ENCODE measurements at regions of chr2 and their contacts with region 1.

Region 1: DNA sequence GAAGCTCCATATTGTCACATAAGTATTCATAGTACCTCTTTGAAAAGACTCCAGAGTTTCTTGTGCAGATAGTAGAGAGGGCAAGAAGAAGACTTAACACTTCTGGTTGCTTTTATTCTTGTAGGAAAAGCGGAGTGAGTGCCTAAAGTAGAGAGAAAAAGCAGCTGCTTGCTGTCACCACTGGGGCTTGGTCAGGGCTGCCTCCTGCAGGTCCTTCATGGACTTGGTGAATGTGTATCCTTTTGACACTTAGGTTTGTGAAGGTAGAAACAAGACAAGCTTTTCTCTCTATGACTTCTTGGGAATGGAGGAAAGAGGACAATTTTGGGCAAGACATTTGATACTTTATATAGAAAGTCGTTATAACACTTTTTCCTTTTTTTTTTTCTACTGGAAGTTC is 312.8 kb upstream of the FANCL start:
- DNase-seq: no peak
- H3K4me3 ChIP-seq: no peak overlapping the region
- H3K27ac ChIP-seq: no peak overlapping the region
- H3K4me1 ChIP-seq: peaks cover 0 to 8% (median 2%) of the 10 kb centered on the region in 4 experiments; a peak in 4 of 7 replicates
- H3K27me3 ChIP-seq: no peaks in the 10 kb centered on the region
- CTCF ChIP-seq: peak; percentile 67 to 84 (median 72)
- EP300 ChIP-seq: no peak
- POLR2A ChIP-seq: no peak
- RAD21 ChIP-seq: peak; percentile 89 to 94

Region 2: DNA sequence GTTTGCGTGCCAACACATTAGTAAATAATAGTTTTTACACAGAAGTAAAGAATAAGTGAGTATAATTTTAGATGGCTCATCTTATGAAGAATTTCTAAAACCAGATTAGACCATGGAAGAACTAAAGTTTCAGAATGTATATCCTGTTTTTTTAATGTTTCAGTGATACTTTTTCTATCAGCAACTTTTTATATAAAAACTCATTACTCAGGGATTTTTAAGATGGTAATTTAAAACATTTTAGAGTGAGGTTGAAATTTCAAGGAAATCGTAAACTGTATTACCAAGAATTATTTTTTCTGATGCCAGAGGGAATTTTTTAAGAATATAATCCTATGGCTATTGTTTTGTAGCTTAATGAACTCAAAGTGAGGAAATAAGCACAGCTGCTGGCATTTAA is 184.3 kb before region 1 on chr2:
- CTCF ChIA-PET with region 1: no interaction called
- POLR2A ChIA-PET with region 1: no interaction called
- DNase-seq: no peak
- H3K4me3 ChIP-seq: no peak overlapping the region
- H3K27ac ChIP-seq: no peak overlapping the region
- H3K4me1 ChIP-seq: no peaks in the 10 kb centered on the region; a peak in 1 of 7 replicates
- H3K27me3 ChIP-seq: no peaks in the 10 kb centered on the region
- CTCF ChIP-seq: no peak
- EP300 ChIP-seq: no peak
- POLR2A ChIP-seq: no peak
- RAD21 ChIP-seq: no peak

Region 3: DNA sequence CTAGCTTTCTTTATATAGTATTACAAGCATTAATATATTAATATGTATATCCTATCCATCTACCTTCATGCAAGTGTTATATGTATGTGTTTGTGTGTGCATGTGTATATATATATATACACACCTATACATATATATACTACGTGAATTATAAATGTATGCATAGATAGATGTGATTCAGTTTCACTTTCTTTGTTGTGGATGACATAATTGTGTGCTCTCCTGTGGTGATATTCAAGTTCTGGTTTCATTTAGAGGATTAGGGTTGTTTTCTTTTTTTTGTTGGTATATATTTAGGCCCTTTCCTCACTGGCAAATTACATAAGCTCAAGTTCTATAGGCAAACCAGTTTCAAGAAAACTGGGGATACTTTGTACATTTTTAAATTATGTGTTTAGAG is 87.1 kb before region 1 on chr2:
- CTCF ChIA-PET with region 1: interaction called, 12 read pairs
- POLR2A ChIA-PET with region 1: no interaction called
- DNase-seq: no peak
- H3K4me3 ChIP-seq: no peak overlapping the region
- H3K27ac ChIP-seq: no peak overlapping the region
- H3K4me1 ChIP-seq: no peaks in the 10 kb centered on the region
- H3K27me3 ChIP-seq: no peaks in the 10 kb centered on the region
- CTCF ChIP-seq: no peak
- EP300 ChIP-seq: no peak
- POLR2A ChIP-seq: no peak
- RAD21 ChIP-seq: no peak

Region 4: DNA sequence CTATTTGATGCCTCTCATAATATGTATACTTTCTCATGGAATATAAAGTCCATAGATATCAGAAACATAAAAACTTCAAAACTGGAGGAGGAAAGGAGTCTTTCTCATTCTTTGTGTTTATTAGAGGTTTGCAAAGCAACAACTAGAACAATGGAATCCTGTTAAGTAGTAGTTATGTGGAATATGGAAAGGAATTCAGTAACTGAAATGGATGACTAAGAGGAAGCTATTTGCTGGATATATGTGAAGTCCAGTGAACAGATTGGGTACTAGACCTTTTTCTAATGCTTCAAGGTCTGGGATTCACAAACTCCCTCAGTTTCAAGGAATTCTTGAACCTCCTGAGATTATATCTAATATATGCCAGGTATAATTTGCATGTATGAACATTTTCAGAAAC is 40.8 kb after region 1 on chr2:
- CTCF ChIA-PET with region 1: no interaction called
- POLR2A ChIA-PET with region 1: no interaction called
- DNase-seq: no peak
- H3K4me3 ChIP-seq: no peak overlapping the region
- H3K27ac ChIP-seq: no peak overlapping the region
- H3K4me1 ChIP-seq: peaks cover 0 to 4% (median 0%) of the 10 kb centered on the region in 4 experiments; a peak in 1 of 7 replicates
- H3K27me3 ChIP-seq: no peaks in the 10 kb centered on the region
- CTCF ChIP-seq: no peak
- EP300 ChIP-seq: no peak
- POLR2A ChIP-seq: no peak
- RAD21 ChIP-seq: no peak

Region 5: DNA sequence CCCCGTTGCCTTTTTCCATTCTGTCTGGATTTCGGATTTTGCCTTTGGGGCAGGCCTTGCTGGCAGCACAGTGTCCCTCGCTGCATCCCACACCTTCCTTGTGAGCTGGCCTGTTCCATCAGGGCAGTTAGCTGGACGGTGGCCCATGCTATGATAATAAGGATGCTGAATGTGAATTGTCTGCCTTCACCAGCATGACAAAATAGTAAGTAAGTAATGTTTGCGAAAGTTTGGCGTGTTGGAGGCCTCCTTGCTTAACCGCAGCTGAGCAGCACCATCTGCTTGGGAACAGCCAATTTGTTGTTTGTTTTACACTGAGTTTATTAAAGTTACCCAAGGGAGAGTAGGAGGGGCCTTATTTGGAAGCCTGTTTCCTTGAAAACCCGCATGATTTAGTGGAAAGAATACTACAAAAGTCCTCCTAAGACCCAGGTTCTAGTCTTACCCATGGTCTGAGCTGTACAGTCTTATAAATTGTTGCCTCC is 156.9 kb after region 1 on chr2:
- CTCF ChIA-PET with region 1: no interaction called
- POLR2A ChIA-PET with region 1: no interaction called
- DNase-seq: no peak
- H3K4me3 ChIP-seq: no peak overlapping the region
- H3K27ac ChIP-seq: no peak overlapping the region
- H3K4me1 ChIP-seq: no peaks in the 10 kb centered on the region
- H3K27me3 ChIP-seq: no peaks in the 10 kb centered on the region
- CTCF ChIP-seq: no peak
- EP300 ChIP-seq: no peak
- POLR2A ChIP-seq: no peak
- RAD21 ChIP-seq: no peak